Activated naive CD4-positive, alpha-beta T cell treated with anti-CD3 and anti-CD28 coated beads for 36 hours (primary cell): ENCODE measurements at regions of chr7 and their contacts with region 1.

Region 1: GRCh38 chr7:100215895-100216294 is 3.9 kb upstream of the PVRIG start:
- DNase-seq: no peak
- H3K4me3 Mint-ChIP-seq: no peak overlapping the region
- H3K27ac Mint-ChIP-seq: peak overlapping the region; percentile 8
- H3K4me1 Mint-ChIP-seq: peaks cover 67% of the 10 kb centered on the region
- H3K27me3 Mint-ChIP-seq: no peaks in the 10 kb centered on the region

Region 2: GRCh38 chr7:100109521-100110162 is 106.3 kb before region 1 on chr7:
- CTCF ChIA-PET with region 1: no interaction called
- intact Hi-C with region 1: no loop called
- DNase-seq: no peak
- H3K4me3 Mint-ChIP-seq: no peak overlapping the region
- H3K27ac Mint-ChIP-seq: no peak overlapping the region
- H3K4me1 Mint-ChIP-seq: no peaks in the 10 kb centered on the region
- H3K27me3 Mint-ChIP-seq: no peaks in the 10 kb centered on the region

Region 3: DNA sequence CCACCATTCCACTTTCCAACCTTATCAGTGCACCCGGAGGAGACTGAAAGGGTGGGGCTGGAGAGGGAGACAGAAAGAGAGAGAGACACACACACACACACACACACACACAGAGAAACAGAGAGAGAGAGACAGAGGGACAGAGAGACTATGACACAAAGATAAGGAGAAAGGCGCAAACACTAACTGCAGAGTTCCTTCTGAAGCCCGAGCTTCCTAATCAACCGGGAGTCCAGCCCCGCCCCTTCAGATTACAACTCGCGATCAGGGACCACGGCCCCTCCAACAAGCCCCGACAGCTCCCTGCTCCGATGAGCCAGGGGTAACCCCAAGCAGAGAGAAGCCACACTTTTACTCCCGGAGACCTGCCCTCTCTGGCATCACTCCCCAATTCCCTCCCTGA is 48.0 kb before region 1 on chr7:
- CTCF ChIA-PET with region 1: interaction called, 12 read pairs
- intact Hi-C with region 1: no loop called
- DNase-seq: peak; percentile 35
- H3K4me3 Mint-ChIP-seq: peak overlapping the region; percentile 78
- H3K27ac Mint-ChIP-seq: peak overlapping the region; percentile 85
- H3K4me1 Mint-ChIP-seq: peaks cover 72% of the 10 kb centered on the region
- H3K27me3 Mint-ChIP-seq: no peaks in the 10 kb centered on the region

Region 4: DNA sequence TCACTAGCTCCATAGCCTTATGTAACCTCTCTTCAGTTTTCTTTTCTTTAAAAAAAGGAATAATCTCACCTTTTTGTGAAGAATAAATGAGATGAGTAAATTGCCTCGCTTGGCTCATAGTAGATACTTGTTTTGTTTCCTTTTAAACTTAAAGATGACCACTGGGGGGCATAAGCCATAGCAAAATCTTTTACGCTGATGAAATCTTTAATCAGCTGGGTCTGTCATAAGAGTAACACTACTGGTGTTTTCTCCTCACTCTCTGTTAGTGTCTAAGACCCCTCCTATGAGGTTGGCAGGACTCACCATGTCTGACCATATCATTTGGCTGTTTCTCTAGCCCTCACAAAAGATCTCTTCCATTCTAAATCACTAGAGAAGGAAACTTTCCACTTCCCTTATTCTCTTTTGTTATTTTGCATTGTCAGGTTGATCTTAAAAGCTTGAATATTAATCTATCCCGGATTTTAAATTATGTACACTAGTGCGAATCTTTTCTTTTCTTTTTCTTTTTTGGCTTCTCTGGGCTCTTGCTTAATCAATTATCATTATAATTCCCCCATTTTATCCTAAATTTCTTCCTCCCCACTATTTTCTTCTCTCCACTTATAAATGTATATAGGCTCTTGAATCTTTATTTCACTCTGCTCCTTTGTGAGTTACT is 25.7 kb before region 1 on chr7:
- CTCF ChIA-PET with region 1: interaction called, 39 read pairs
- intact Hi-C with region 1: loop called (anchors 1 kb)
- DNase-seq: no peak
- H3K4me3 Mint-ChIP-seq: no peak overlapping the region
- H3K27ac Mint-ChIP-seq: peak overlapping the region; percentile 80
- H3K4me1 Mint-ChIP-seq: peaks cover 45% of the 10 kb centered on the region
- H3K27me3 Mint-ChIP-seq: no peaks in the 10 kb centered on the region